Common myeloid progenitor, CD34-positive (primary cell): ENCODE measurements at regions of chr14 and their contacts with region 1.

Region 1: DNA sequence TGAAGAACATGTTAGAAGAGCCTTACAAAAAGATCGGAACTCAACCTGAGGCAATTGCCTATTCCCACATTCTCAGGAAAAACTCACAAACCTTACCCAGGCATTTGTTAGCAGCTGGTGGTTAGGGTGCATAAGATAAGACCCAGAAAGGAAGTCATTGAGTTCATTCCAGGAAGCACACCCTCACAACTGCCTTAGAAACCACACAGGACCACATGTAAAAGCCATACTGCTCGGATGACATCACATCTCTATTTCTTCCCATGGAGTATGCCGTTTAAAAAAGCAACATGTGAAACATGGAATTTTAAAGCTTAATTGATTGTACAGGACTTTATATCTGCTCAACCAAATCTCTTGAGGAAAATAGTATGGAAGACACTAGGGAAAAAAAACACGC is 411.2 kb downstream of the DAD1 start:
- DNase-seq: peak; percentile 84 to 96 (median 92)
- H3K4me3 ChIP-seq: peak overlapping the region in 3 of 7 experiments; percentile 0 to 48 (median 35)
- H3K27ac ChIP-seq: no peak overlapping the region
- H3K4me1 ChIP-seq: peaks cover 9 to 35% (median 23%) of the 10 kb centered on the region in 4 experiments
- H3K27me3 ChIP-seq: peaks cover 0 to 67% (median 21%) of the 10 kb centered on the region in 5 experiments

Region 2: DNA sequence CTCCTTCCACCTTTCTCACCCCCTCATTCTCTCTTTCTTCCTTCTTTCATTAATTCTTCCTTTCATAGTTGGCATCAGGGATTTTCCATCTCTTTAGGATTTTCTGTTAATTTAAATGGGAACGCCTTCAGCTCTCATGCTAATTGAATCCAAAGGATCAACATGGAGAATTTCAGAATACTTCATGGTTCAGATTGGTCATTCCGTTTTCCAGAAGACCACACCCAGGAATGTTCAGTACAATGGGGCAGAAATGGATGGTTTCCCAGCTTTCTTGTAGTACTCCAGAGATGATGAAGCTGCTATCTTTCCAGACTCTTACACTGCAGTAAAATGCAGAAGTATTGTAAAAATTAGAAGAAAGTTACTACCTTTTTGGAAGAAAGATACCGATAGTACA is 28.8 kb before region 1 on chr14:
- CTCF ChIA-PET with region 1: no interaction called
- POLR2A ChIA-PET with region 1: no interaction called
- DNase-seq: no peak
- H3K4me3 ChIP-seq: no peak overlapping the region
- H3K27ac ChIP-seq: no peak overlapping the region
- H3K4me1 ChIP-seq: no peaks in the 10 kb centered on the region
- H3K27me3 ChIP-seq: peaks cover 0 to 11% (median 0%) of the 10 kb centered on the region in 5 experiments

Region 3: DNA sequence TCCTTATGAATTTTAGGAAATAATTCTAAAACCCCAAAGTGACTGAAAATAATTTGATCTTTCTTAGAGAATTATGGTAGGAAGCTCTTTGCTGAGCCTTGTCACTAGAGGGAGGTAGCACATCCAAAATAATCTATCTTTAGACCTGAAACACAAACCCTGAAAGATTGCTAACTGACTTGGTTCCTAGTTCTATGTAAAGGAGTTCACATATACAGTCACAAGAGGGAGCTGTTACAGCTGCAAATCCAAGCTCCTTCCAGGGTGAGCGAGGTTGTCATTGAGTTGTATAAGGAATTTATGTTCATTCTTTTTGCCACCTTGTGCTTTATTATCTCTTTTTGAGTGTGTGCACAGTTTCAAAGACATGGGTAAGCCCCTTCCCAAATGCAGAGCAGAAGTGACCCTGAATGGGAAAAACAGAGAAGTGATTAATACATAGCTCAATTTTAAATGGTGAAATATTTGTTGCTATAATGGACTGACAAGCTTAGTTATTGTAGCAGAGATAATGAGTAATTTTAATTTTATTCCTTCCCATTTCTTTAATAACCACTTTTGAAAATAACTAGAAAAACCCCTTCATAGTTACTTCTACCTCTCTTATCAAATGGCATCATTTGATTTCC is 23.2 kb after region 1 on chr14:
- CTCF ChIA-PET with region 1: interaction called, 19 read pairs
- POLR2A ChIA-PET with region 1: no interaction called
- DNase-seq: peak; percentile 81 to 88 (median 88)
- H3K4me3 ChIP-seq: no peak overlapping the region
- H3K27ac ChIP-seq: no peak overlapping the region
- H3K4me1 ChIP-seq: no peaks in the 10 kb centered on the region
- H3K27me3 ChIP-seq: no peaks in the 10 kb centered on the region